GM10248 (cell line): ENCODE measurements at regions of chr21 and their contacts with region 1.

Region 1: DNA sequence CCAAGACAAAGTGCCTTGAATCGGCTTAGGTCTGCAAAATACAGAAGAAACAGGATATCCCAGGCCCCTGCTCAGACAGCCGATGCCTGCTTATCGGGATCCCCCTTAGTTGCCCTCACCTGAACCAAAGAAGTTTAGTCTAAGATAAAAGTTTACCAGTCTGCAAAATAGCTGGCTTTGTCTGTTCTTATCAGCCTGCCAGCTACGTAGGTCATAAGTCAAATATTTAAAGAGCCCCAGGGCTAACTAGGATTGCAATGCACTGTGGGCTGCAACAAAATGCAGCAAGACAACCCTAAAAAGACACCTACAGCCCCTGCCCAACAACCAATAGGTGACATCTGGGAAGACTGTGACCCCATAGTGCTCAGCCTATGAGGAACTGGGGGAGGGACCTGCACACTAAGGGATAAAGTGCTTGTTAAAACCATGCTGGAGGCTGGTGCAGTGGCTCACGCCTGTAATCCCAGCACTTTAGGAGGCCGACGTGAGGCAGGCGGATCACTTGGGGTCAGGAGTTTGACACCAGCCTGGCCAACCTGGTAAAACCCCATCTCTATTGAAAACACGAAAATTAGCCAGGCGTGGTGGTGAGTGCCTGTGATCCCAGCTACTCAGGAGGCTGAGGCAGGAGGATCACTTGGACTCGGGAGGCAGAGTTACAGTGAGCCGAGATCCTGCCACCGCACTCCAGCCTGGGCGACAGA is 27.4 kb downstream of the LRRC3 start:
- DNase-seq: no peak
- CTCF ChIP-seq: no peak

Region 2: DNA sequence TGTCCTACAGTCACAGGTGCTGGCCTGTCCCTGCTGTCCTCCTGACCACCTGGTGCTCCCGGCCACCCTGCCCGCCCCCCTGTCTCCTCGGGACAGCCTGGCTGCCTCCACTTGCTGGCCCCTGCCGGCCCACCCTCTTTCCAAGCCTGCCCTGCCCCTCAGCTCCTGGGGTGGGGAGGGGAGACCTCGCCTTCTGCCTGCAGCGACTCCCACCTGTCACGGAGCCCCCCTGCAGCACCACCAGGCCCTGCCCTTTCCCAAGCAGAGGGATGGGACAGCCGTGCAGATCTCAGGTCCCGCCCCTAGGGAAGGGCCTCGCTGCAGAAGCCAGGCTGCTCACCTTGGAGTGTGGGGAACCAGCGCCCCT is 19.9 kb before region 1 on chr21:
- CTCF ChIA-PET with region 1: no interaction called
- POLR2A ChIA-PET with region 1: no interaction called
- DNase-seq: no peak
- CTCF ChIP-seq: no peak

Region 3: GRCh38 chr21:44495611-44496563 is 13.2 kb after region 1 on chr21:
- CTCF ChIA-PET with region 1: interaction called, 11 read pairs
- POLR2A ChIA-PET with region 1: no interaction called
- DNase-seq: no peak
- CTCF ChIP-seq: no peak

Region 4: GRCh38 chr21:44509544-44509943 is 26.8 kb after region 1 on chr21:
- CTCF ChIA-PET with region 1: no interaction called
- POLR2A ChIA-PET with region 1: no interaction called
- DNase-seq: no peak
- CTCF ChIP-seq: no peak